Ascending aorta (tissue), 2 donors: ENCODE measurements at regions of chr12 and their contacts with region 1.

Region 1: GRCh38 chr12:92649511-92650227 is 53.1 kb upstream of the PLEKHG7 start:
- DNase-seq: peak in 1 of 2 donors; percentile 71
- H3K4me3 ChIP-seq: no peak overlapping the region
- H3K27ac ChIP-seq: no peak overlapping the region
- H3K4me1 ChIP-seq: no peaks in the 10 kb centered on the region
- H3K27me3 ChIP-seq: no peaks in the 10 kb centered on the region
- CTCF ChIP-seq: peak; percentile 54 to 69 (median 59)

Region 2: GRCh38 chr12:91361864-91362263 is 1287.8 kb before region 1 on chr12:
- intact Hi-C with region 1: loop called (anchors 1 kb)
- DNase-seq: no peak
- H3K4me3 ChIP-seq: no peak overlapping the region
- H3K27ac ChIP-seq: no peak overlapping the region
- H3K4me1 ChIP-seq: no peaks in the 10 kb centered on the region
- H3K27me3 ChIP-seq: no peaks in the 10 kb centered on the region
- CTCF ChIP-seq: peak; percentile 41 to 69 (median 45)

Region 3: GRCh38 chr12:91382081-91382543 is 1267.6 kb before region 1 on chr12:
- intact Hi-C with region 1: loop called (anchors 5 kb)
- DNase-seq: peak in 1 of 2 donors; percentile 92
- H3K4me3 ChIP-seq: peak overlapping the region; percentile 55 to 61
- H3K27ac ChIP-seq: peak overlapping the region in 1 of 2 donors; percentile 1
- H3K4me1 ChIP-seq: no peaks in the 10 kb centered on the region
- H3K27me3 ChIP-seq: no peaks in the 10 kb centered on the region
- CTCF ChIP-seq: peak; percentile 75 to 89 (median 84)

Region 4: DNA sequence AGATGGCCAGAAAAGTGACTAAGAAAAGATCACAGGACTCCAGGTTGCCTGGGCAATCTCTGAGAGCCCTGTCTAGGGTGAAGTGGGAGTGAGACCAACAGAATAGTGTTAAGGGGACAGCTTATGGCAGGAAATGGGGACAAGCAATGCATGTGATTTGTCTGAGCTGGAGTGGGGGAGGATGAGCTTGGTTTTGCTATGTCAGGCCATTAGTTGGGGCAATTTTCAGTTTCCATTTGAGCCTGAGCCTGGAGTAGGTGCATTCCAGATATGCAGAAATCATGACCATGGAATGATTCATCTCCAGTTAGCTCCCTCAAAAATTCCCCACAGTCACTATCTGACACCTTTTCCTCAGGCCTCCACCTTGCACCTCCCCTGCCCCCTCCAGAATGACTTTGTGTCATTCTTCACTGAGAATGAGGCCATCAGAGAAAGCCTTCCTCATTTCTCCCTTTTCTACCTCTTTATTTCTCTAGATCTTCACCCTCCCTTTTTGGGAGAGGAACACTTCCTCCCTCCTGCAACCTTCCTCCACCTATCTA is 97.7 kb before region 1 on chr12:
- intact Hi-C with region 1: no loop called
- DNase-seq: no peak
- H3K4me3 ChIP-seq: no peak overlapping the region
- H3K27ac ChIP-seq: peak overlapping the region in 1 of 2 donors; percentile 30
- H3K4me1 ChIP-seq: peaks cover 0 to 3% of the 10 kb centered on the region in 2 donors
- H3K27me3 ChIP-seq: no peaks in the 10 kb centered on the region
- CTCF ChIP-seq: no peak

Region 5: DNA sequence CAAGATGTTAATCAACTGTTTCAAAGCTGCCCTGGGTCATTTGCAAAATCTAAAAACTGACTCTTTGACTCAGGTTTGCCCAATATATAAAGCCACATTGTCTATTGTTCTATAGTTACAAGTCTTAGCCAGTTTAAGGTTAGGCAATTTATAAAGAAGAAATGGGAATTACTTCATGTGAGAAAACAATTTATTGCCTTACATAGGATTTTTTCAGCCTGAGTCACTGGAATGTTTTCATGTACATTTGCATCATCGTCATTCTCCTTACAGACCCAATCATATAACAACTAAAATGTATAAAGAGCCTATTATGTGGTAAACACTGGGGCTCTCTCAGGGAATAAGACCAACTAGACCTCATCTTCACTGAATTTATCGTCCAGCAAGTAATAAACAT is 47.2 kb before region 1 on chr12:
- intact Hi-C with region 1: no loop called
- DNase-seq: no peak
- H3K4me3 ChIP-seq: no peak overlapping the region
- H3K27ac ChIP-seq: no peak overlapping the region
- H3K4me1 ChIP-seq: no peaks in the 10 kb centered on the region
- H3K27me3 ChIP-seq: no peaks in the 10 kb centered on the region
- CTCF ChIP-seq: no peak

Region 6: GRCh38 chr12:92796650-92797049 is 147.0 kb after region 1 on chr12:
- intact Hi-C with region 1: no loop called
- DNase-seq: no peak
- H3K4me3 ChIP-seq: no peak overlapping the region
- H3K27ac ChIP-seq: no peak overlapping the region
- H3K4me1 ChIP-seq: no peaks in the 10 kb centered on the region
- H3K27me3 ChIP-seq: no peaks in the 10 kb centered on the region
- CTCF ChIP-seq: no peak

Region 7: DNA sequence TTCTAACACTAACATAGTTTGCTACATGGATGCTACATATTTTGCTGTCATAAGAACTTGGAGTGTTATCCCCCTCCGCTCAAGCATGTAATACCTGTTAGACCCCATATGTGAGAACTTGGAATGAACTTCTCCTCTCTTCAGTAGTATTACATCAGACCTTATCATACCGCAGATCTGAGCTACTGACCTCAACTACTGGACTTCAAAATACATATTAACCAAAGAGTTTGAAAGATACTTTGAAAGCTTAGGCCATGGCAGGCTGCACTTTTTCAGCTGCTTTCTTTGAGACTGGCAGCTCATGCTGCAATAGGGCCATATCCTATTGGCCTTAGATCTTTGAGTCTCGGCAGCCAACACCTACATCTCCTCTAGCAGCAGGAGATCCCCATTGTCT is 204.7 kb after region 1 on chr12:
- intact Hi-C with region 1: no loop called
- DNase-seq: no peak
- H3K4me3 ChIP-seq: no peak overlapping the region
- H3K27ac ChIP-seq: no peak overlapping the region
- H3K4me1 ChIP-seq: peaks cover 0 to 3% of the 10 kb centered on the region in 2 donors
- H3K27me3 ChIP-seq: no peaks in the 10 kb centered on the region
- CTCF ChIP-seq: no peak